ENCODE measurements at regions of chr6 and their contacts with region 1.

Region 1: DNA sequence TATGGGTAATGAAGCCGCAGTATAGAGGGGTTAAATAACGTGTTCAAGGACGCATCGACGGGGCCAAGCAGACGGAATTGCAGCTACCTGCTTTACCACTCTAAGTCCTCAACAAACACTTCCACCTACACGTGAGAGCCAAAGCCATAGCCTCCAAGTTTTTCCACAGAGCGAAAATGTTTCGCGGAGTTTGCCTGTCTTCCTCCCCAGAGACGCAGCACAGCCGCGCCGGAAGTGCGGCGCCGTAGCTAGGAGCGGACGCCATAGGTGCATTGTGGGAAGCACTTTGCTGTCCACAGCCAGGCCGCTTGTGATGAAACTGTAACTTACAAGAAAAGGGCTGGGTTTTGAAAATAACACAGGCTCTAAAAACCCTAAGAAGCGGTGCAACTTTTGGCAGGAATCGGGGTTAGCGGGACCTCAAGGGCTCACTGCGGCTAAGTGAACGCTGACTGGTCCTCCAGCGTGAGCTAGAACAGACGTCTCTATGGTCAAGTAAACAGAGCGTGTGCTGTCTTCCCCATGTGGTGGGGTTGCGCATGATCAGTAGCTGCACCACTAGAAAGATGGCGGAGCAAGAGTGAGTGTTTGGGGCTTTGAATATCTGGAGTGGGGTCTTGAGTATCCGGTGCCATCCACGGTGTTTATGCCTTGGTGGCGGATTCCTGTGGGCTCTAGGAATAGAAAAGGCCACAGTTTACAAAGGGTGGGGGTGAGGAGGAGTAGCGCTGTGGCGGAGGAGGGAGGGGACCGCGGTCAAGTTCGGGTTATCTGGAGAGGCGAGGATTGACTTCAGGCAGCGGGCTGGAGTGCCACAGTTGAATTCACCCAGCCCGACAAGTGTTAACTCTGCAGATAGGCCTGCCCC is at the start of gene RPL7L1:
- DNase-seq: peak; percentile 78 to 92
- ATAC-seq: peak; percentile 91 to 97 (median 92)
- H3K4me3 ChIP-seq: peak within 1 kb of the TSS; percentile 63
- H3K4me3 Mint-ChIP-seq: peak within 1 kb of the TSS; percentile 98
- H3K27ac ChIP-seq: peak within 1 kb of the TSS; percentile 86
- H3K27ac Mint-ChIP-seq: peak within 1 kb of the TSS; percentile 99 to 100
- H3K4me1 ChIP-seq: peaks cover 19% of the 10 kb centered on the region
- H3K4me1 Mint-ChIP-seq: peaks cover 26 to 31% of the 10 kb centered on the region in 2 donors
- H3K27me3 ChIP-seq: no peaks in the 10 kb centered on the region
- H3K27me3 Mint-ChIP-seq: no peaks in the 10 kb centered on the region
- CTCF ChIP-seq: no peak
- total RNA-seq, gene RPL7L1: 66.9 to 67.2 (median 66.9) TPM

Region 2: GRCh38 chr6:42453031-42453653 is 426.5 kb before region 1 on chr6:
- intact Hi-C with region 1: no loop called
- DNase-seq: peak; percentile 53 to 88
- ATAC-seq: peak; percentile 61 to 75 (median 74)
- H3K4me3 ChIP-seq: peak overlapping the region; percentile 65
- H3K4me3 Mint-ChIP-seq: peak overlapping the region; percentile 99
- H3K27ac ChIP-seq: no peak overlapping the region
- H3K27ac Mint-ChIP-seq: peak overlapping the region; percentile 57 to 96
- H3K4me1 ChIP-seq: peaks cover 32% of the 10 kb centered on the region
- H3K4me1 Mint-ChIP-seq: peaks cover 38 to 45% of the 10 kb centered on the region in 2 donors
- H3K27me3 ChIP-seq: no peaks in the 10 kb centered on the region
- H3K27me3 Mint-ChIP-seq: no peaks in the 10 kb centered on the region
- CTCF ChIP-seq: no peak

Region 3: DNA sequence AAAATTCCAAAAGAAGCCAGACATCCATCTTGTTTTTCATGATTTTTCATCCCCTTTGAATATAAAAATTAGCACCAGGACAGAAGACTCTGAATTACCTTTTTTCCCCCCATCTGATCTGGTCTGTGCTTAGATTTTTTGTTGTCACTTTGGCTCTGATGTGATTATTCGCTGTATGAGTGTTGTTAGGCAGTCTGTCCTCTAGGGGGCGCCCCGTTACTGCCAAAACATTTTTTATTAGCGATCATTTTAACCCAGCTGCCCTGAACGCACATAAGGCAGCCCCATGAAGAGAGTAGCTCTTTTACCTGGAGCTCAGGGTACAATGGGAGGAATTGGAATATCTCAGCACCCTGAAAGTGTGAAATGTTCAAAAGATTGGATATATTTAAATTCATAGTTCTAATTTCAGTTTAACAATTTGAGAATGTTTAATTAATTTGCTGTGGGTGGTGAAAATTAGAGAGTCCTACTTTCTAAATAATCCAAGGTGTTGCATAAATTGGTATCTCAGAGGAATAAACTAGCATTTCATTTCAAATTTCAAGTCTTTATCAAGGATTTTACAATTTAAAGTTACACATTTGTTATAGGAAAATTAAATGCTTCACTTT is 218.0 kb before region 1 on chr6:
- intact Hi-C with region 1: loop called (anchors 1 kb)
- DNase-seq: peak; percentile 80 to 89
- ATAC-seq: peak; percentile 92 to 100 (median 96)
- H3K4me3 ChIP-seq: no peak overlapping the region
- H3K4me3 Mint-ChIP-seq: no peak overlapping the region
- H3K27ac ChIP-seq: no peak overlapping the region
- H3K27ac Mint-ChIP-seq: peak overlapping the region in 1 of 2 donors; percentile 17
- H3K4me1 ChIP-seq: no peaks in the 10 kb centered on the region
- H3K4me1 Mint-ChIP-seq: no peaks in the 10 kb centered on the region
- H3K27me3 ChIP-seq: no peaks in the 10 kb centered on the region
- H3K27me3 Mint-ChIP-seq: no peaks in the 10 kb centered on the region
- CTCF ChIP-seq: peak; percentile 91

Region 4: GRCh38 chr6:42745707-42746462 is 133.7 kb before region 1 on chr6 and contains the start of gene TBCC:
- intact Hi-C with region 1: loop called (anchors 2 kb)
- DNase-seq: peak; percentile 86 to 98
- ATAC-seq: peak; percentile 83 to 92 (median 85)
- H3K4me3 ChIP-seq: peak within 1 kb of the TSS; percentile 98
- H3K4me3 Mint-ChIP-seq: peak within 1 kb of the TSS; percentile 100
- H3K27ac ChIP-seq: peak within 1 kb of the TSS; percentile 95
- H3K27ac Mint-ChIP-seq: peak within 1 kb of the TSS; percentile 98 to 100
- H3K4me1 ChIP-seq: peaks cover 38% of the 10 kb centered on the region
- H3K4me1 Mint-ChIP-seq: peaks cover 22 to 23% of the 10 kb centered on the region in 2 donors
- H3K27me3 ChIP-seq: no peaks in the 10 kb centered on the region
- H3K27me3 Mint-ChIP-seq: no peaks in the 10 kb centered on the region
- CTCF ChIP-seq: no peak
- total RNA-seq, gene TBCC: 64.1 to 77.6 (median 65.6) TPM

Region 5: DNA sequence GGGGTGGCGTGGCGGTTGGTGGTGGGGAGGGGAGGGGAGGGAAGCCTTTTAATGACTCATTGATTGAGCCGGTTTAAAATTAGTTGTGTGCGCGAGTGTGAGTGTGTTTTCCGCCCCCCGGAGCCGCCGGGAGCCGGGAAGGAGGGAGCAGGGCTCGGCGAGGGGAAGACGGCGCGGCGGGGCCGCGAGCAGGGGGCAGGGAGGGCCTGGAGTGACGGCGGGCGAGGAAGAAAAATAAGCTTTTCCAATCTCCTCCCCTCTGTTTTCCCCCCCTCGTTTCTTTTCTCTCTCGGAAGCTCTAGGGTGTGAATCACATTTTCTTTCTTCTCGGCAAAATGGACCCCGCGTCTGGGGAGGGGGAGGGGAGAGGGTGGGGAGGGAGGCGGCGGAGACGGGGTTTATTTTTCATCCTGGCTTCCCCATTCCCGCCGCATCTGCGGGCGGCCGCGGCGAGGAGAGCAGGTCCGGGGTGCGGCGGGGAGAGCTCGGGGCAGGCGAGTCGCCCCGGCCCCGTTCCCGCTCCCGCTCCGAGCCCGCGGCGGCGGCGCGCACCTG is 96.9 kb before region 1 on chr6:
- intact Hi-C with region 1: loop called (anchors 2 kb)
- DNase-seq: peak; percentile 64 to 89
- ATAC-seq: peak; percentile 51 to 69 (median 60)
- H3K4me3 ChIP-seq: peak overlapping the region; percentile 89
- H3K4me3 Mint-ChIP-seq: peak overlapping the region; percentile 95
- H3K27ac ChIP-seq: peak overlapping the region; percentile 100
- H3K27ac Mint-ChIP-seq: no peak overlapping the region
- H3K4me1 ChIP-seq: peaks cover 22% of the 10 kb centered on the region
- H3K4me1 Mint-ChIP-seq: peaks cover 6 to 14% of the 10 kb centered on the region in 2 donors
- H3K27me3 ChIP-seq: no peaks in the 10 kb centered on the region
- H3K27me3 Mint-ChIP-seq: no peaks in the 10 kb centered on the region
- CTCF ChIP-seq: no peak

Region 6: DNA sequence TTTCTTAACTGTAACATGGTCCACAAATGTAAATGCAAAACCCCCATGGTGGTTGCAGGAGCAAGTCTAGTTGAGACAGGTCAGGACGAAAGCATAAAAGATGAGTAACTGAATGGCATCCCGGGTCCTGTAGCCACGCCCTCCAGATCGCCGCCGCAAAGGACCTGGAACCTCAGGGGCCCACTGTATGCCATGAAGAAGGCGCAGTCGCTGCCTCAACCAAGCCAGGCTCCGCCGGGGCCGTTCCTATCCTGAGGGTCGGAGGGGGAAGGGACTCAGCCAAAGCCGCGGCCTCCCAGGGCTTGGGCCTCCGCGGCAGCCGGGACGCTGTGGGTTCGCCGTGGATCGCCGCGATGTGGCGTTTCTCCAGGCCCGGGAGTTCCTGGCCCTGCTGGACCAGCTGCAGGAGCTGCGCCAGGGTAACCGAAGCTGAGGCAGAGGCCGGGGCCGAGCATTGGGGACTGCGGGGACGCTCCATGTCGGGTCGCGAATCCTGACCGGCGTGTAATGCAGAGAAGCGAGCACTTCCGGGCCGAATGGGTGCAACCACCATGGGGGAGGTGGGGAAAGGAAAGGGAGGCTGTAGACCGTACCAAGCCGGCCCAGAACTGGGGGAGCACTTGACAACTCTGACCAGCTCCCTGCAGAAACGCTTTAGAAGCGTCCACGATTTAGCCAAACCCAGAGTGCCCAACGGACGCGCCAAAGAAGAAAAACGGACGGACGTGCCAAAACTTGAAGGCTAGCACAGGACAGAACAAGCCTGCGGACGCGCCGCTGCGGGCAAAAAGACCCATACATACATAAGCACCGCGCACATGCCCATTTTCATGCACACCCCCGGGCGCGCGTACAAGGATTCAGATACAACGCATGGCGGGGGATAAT is 10.9 kb after region 1 on chr6:
- intact Hi-C with region 1: loop called (anchors 1 kb)
- DNase-seq: peak; percentile 82 to 93
- ATAC-seq: peak; percentile 97 to 99 (median 98)
- H3K4me3 ChIP-seq: peak overlapping the region; percentile 98
- H3K4me3 Mint-ChIP-seq: peak overlapping the region; percentile 97
- H3K27ac ChIP-seq: peak overlapping the region; percentile 89
- H3K27ac Mint-ChIP-seq: peak overlapping the region; percentile 91 to 97
- H3K4me1 ChIP-seq: peaks cover 13% of the 10 kb centered on the region
- H3K4me1 Mint-ChIP-seq: peaks cover 7 to 8% of the 10 kb centered on the region in 2 donors
- H3K27me3 ChIP-seq: no peaks in the 10 kb centered on the region
- H3K27me3 Mint-ChIP-seq: no peaks in the 10 kb centered on the region
- CTCF ChIP-seq: no peak

Measured in natural killer cell (primary cell).